ENCODE measurements at regions of chr18 and their contacts with region 1.

Region 1: GRCh38 chr18:70337139-70337972 is 48.5 kb downstream of the SOCS6 start:
- DNase-seq: peak; percentile 32
- H3K4me3 ChIP-seq: no peak overlapping the region
- H3K27ac ChIP-seq: peak overlapping the region in 3 of 4 donors; percentile 26 to 35 (median 27)
- H3K4me1 ChIP-seq: peaks cover 0 to 11% (median 2%) of the 10 kb centered on the region in 4 donors
- H3K27me3 ChIP-seq: no peaks in the 10 kb centered on the region
- CTCF ChIP-seq: no peak
- EP300 ChIP-seq: no peak
- POLR2A ChIP-seq: no peak

Region 2: GRCh38 chr18:70194227-70194890 is 143.0 kb before region 1 on chr18:
- in situ Hi-C with region 1: no loop called
- intact Hi-C with region 1: no loop called
- DNase-seq: no peak
- H3K4me3 ChIP-seq: no peak overlapping the region
- H3K27ac ChIP-seq: no peak overlapping the region
- H3K4me1 ChIP-seq: no peaks in the 10 kb centered on the region
- H3K27me3 ChIP-seq: no peaks in the 10 kb centered on the region
- CTCF ChIP-seq: no peak
- EP300 ChIP-seq: no peak
- POLR2A ChIP-seq: no peak

Region 3: DNA sequence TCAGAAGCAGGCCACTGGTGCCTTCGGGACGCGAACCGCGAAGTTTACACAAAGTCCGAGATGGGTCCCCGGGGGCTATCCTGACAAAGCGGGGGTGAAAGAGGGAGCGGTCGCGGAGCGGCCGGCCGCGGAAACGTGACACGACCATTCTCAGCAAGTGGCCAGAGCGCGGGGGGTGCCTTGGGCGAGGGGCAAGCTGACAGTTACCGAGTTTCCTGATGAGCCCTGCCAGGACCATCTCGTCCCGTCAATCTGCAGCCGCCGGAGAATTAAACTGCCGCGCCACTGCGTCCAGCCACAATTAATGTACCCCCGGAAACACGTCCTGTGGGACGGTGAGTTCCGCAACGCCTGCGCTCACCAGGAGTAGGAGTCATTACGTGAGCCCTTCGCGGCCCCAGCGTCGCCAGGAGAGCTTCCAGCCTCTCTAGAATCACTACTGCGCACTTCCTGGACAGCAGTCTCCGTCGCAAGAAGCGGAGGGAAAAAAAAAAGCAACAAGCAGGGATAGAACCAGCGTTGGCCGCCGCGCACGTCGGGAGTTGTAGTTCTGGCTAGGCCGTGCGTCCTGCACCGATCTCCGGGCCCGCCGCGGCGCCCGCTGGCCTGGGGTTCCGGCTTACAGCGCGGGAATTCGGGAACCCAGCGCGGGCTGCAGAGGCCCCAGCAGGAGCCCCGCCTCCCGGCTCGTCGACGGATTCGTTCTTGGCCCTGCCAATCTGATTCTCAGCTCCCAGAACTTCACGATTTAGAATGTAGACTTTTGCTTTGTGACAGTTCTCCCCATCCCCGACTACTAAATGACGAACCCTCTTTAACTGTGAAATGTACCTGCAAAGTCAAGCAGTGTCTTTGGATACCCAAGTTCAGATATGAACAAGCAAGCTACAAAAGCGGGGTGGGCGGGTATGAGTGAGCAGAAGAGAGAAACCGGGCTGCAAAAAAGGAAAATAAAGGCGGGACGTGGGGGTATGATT is 131.6 kb before region 1 on chr18 and contains the start of gene RTTN:
- in situ Hi-C with region 1: loop called in 1 of 4 experiments (anchors 25 kb)
- intact Hi-C with region 1: no loop called
- DNase-seq: peak; percentile 95
- H3K4me3 ChIP-seq: peak within 1 kb of the TSS; percentile 23 to 87 (median 72)
- H3K27ac ChIP-seq: peak within 1 kb of the TSS; percentile 93 to 97 (median 94)
- H3K4me1 ChIP-seq: peaks cover 9 to 15% (median 10%) of the 10 kb centered on the region in 4 donors
- H3K27me3 ChIP-seq: no peaks in the 10 kb centered on the region
- CTCF ChIP-seq: peak in 1 of 5 experiments; percentile 5
- EP300 ChIP-seq: no peak
- POLR2A ChIP-seq: peak; percentile 32
- total RNA-seq, gene RTTN: 9.7 to 18.7 (median 13.1) TPM

Region 4: DNA sequence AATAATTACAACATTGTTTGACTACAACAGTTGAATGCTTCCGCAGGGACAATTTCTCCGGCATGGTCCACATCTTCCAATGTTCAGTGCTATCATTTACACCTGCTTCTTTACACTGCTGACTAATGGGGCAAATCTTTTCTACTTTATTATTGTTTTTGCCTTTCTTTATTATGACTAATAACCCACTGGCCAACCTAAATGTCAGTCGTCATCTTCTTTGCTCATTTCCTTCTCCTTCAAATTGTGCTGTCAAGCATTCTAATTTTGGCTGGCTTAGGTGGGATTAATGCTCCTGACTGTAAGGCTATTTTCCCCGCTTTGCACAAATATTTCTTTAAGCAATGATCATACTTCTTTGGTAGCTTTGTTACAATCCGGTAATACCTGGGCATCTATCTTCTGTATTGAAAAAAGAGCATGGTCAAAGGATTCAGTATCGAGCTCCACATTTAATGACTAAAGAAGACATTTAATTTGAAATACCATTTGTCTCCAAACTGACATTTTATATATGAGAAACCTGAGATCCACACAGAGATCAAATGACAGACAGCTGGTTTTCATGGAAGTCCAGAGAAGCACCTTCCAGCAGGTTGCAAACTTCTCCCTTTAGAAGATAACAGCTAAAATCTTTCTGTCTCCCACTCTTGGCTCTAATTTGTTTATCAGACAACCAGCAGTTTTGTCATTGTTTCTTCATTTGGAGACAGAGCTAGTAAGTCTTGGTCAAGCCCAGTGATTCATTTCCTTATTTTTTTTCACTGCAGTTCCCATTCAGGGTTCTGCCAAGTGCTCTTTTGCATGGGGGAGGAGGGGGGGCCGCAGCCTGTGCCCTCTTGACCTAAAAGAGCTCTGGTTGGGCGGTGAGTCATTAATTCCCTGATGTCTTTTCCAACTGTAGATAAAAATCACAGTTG is 84.4 kb after region 1 on chr18:
- in situ Hi-C with region 1: no loop called
- intact Hi-C with region 1: no loop called
- DNase-seq: peak; percentile 68
- H3K4me3 ChIP-seq: no peak overlapping the region
- H3K27ac ChIP-seq: peak overlapping the region; percentile 44 to 56 (median 54)
- H3K4me1 ChIP-seq: peaks cover 9 to 36% (median 17%) of the 10 kb centered on the region in 4 donors
- H3K27me3 ChIP-seq: no peaks in the 10 kb centered on the region
- CTCF ChIP-seq: no peak
- EP300 ChIP-seq: no peak
- POLR2A ChIP-seq: no peak

Measured in transverse colon (tissue), 4 donors.